ENCODE measurements at regions of chr1 and their contacts with region 1.

Region 1: GRCh38 chr1:1906185-1907097 is 8.6 kb upstream of the CALML6 start:
- DNase-seq: peak; percentile 58
- ATAC-seq: peak; percentile 29
- H3K4me3 Mint-ChIP-seq: peak overlapping the region; percentile 73
- H3K27ac Mint-ChIP-seq: peak overlapping the region; percentile 70
- H3K4me1 Mint-ChIP-seq: peaks cover 26% of the 10 kb centered on the region
- H3K27me3 Mint-ChIP-seq: no peaks in the 10 kb centered on the region
- CTCF ChIP-seq: no peak

Region 2: DNA sequence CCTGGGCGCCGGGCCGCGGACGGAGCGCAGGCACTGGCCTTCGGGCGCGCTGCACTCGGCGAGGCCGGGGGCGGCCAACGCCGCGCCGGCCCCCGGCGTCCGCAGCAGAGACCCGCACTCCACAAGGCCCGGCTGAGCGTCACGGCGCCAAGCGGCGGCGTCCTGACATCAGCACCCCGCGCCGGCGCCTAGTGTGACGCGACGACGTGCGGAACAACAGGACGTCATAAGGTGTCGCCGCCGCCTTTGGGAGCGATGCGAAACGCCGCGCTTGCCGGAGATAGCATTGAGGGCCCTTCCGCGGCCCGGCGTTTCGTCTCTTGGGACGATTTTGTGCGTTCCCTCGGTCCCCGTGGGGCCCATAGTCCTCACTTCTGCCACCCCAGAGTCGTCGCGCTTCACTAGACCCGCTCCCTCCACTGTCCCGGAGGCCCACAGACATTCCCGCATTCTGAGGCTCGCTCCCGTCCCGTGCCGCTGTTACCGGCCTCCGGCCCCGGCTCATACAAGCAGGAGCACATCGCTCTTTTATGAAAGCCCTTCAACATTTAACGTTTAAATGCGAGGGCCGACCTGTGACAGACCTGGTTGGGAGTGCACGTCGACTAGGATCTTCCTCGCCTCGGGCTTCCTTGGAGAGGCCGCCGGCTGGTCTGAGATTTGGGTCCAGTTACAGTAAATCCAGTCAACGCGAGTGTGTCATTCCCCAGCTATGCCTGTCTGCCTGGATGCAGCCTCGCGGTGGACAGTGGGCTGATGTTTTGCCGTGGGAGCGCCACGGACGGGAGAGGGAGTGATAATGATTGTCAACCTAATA is 331.5 kb before region 1 on chr1 and contains the start of gene SSU72:
- CTCF ChIA-PET with region 1: no interaction called
- POLR2A ChIA-PET with region 1: no interaction called
- intact Hi-C with region 1: loop called (anchors 5 kb)
- DNase-seq: peak; percentile 95
- ATAC-seq: peak; percentile 85
- H3K4me3 Mint-ChIP-seq: peak within 1 kb of the TSS; percentile 96
- H3K27ac Mint-ChIP-seq: peak within 1 kb of the TSS; percentile 98
- H3K4me1 Mint-ChIP-seq: peaks cover 37% of the 10 kb centered on the region
- H3K27me3 Mint-ChIP-seq: peaks cover 4% of the 10 kb centered on the region
- CTCF ChIP-seq: no peak
- total RNA-seq, gene SSU72: 111 and 118 TPM in 2 replicates

Region 3: GRCh38 chr1:1622010-1622787 is 284.2 kb before region 1 on chr1:
- CTCF ChIA-PET with region 1: no interaction called
- POLR2A ChIA-PET with region 1: no interaction called
- intact Hi-C with region 1: no loop called
- DNase-seq: no peak
- ATAC-seq: no peak
- H3K4me3 Mint-ChIP-seq: no peak overlapping the region
- H3K27ac Mint-ChIP-seq: no peak overlapping the region
- H3K4me1 Mint-ChIP-seq: peaks cover 3% of the 10 kb centered on the region
- H3K27me3 Mint-ChIP-seq: no peaks in the 10 kb centered on the region
- CTCF ChIP-seq: no peak

Region 4: GRCh38 chr1:1721201-1721600 is 185.2 kb before region 1 on chr1:
- CTCF ChIA-PET with region 1: interaction called, 4 read pairs
- POLR2A ChIA-PET with region 1: interaction called, 3 read pairs
- intact Hi-C with region 1: loop called (anchors 5 kb)
- DNase-seq: no peak
- ATAC-seq: no peak
- H3K4me3 Mint-ChIP-seq: no peak overlapping the region
- H3K27ac Mint-ChIP-seq: no peak overlapping the region
- H3K4me1 Mint-ChIP-seq: peaks cover 4% of the 10 kb centered on the region
- H3K27me3 Mint-ChIP-seq: no peaks in the 10 kb centered on the region
- CTCF ChIP-seq: no peak

Region 5: GRCh38 chr1:1777950-1778662 is 128.3 kb before region 1 on chr1 and contains the start of gene NADK:
- CTCF ChIA-PET with region 1: interaction called, 17 read pairs
- POLR2A ChIA-PET with region 1: interaction called, 29 read pairs
- intact Hi-C with region 1: loop called (anchors 1 kb)
- DNase-seq: peak; percentile 90
- ATAC-seq: peak; percentile 29
- H3K4me3 Mint-ChIP-seq: peak within 1 kb of the TSS; percentile 85
- H3K27ac Mint-ChIP-seq: peak within 1 kb of the TSS; percentile 95
- H3K4me1 Mint-ChIP-seq: peaks cover 76% of the 10 kb centered on the region
- H3K27me3 Mint-ChIP-seq: no peaks in the 10 kb centered on the region
- CTCF ChIP-seq: no peak
- total RNA-seq, gene NADK: 106 and 122 TPM in 2 replicates

Region 6: DNA sequence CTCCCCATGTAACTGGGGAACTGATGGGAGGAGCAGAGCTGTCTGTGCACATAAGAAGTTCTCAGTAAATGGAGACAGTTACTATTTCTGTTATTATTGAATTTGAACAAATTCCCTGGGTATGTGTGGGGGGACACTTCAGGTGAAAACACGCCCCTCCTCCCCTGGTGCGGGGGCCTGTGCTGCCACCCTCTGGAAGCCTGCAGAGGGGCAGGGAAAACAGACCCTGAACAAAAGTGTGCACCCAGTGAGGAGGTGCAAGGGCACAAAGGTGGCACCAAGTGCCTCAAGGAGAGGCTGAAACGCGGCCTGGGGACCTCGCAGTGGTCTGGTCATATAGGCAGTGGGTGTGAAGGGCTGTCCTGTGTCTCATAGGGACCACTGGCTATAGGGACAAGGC is 110.0 kb before region 1 on chr1:
- CTCF ChIA-PET with region 1: interaction called, 6 read pairs
- POLR2A ChIA-PET with region 1: interaction called, 4 read pairs
- intact Hi-C with region 1: loop called (anchors 5 kb)
- DNase-seq: no peak
- ATAC-seq: no peak
- H3K4me3 Mint-ChIP-seq: peak overlapping the region; percentile 30
- H3K27ac Mint-ChIP-seq: no peak overlapping the region
- H3K4me1 Mint-ChIP-seq: peaks cover 48% of the 10 kb centered on the region
- H3K27me3 Mint-ChIP-seq: no peaks in the 10 kb centered on the region
- CTCF ChIP-seq: no peak

Region 7: GRCh38 chr1:1858382-1859086 is 47.9 kb before region 1 on chr1:
- CTCF ChIA-PET with region 1: interaction called, 6 read pairs
- POLR2A ChIA-PET with region 1: interaction called, 10 read pairs
- intact Hi-C with region 1: no loop called
- DNase-seq: no peak
- ATAC-seq: no peak
- H3K4me3 Mint-ChIP-seq: peak overlapping the region; percentile 48
- H3K27ac Mint-ChIP-seq: peak overlapping the region; percentile 66
- H3K4me1 Mint-ChIP-seq: peaks cover 86% of the 10 kb centered on the region
- H3K27me3 Mint-ChIP-seq: no peaks in the 10 kb centered on the region
- CTCF ChIP-seq: no peak

Region 8: GRCh38 chr1:1919304-1920056 is 13.0 kb after region 1 on chr1:
- CTCF ChIA-PET with region 1: no interaction called
- POLR2A ChIA-PET with region 1: interaction called, 10 read pairs
- intact Hi-C with region 1: loop called (anchors 1 kb)
- DNase-seq: peak; percentile 100
- ATAC-seq: peak; percentile 90
- H3K4me3 Mint-ChIP-seq: peak overlapping the region; percentile 73
- H3K27ac Mint-ChIP-seq: peak overlapping the region; percentile 56
- H3K4me1 Mint-ChIP-seq: no peaks in the 10 kb centered on the region
- H3K27me3 Mint-ChIP-seq: no peaks in the 10 kb centered on the region
- CTCF ChIP-seq: no peak

Region 9: GRCh38 chr1:1938613-1939295 is 32.3 kb after region 1 on chr1:
- CTCF ChIA-PET with region 1: no interaction called
- POLR2A ChIA-PET with region 1: no interaction called
- intact Hi-C with region 1: no loop called
- DNase-seq: no peak
- ATAC-seq: no peak
- H3K4me3 Mint-ChIP-seq: no peak overlapping the region
- H3K27ac Mint-ChIP-seq: no peak overlapping the region
- H3K4me1 Mint-ChIP-seq: peaks cover 2% of the 10 kb centered on the region
- H3K27me3 Mint-ChIP-seq: no peaks in the 10 kb centered on the region
- CTCF ChIP-seq: no peak

Region 10: DNA sequence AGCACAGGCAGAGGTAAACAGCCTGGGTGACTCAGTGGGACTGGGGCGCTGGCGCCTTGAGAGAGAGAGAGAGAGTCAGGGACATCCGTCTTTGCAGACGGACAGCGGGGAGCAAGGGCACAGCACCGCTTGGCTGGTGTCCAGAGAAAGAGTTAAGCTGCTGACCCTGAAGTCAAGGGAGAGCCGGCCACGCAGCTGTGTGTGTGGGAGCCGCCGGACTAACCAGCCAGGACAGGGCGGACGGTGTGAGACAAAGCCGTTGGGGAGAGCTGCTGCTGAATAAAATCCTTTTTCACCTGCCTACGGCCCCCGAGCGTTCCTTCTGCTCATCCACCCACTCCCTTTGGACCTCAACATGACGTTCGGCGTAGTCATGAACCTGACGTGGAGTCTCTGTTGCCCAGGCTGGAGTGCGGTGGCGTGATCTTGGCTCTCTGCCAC is 82.7 kb after region 1 on chr1:
- CTCF ChIA-PET with region 1: no interaction called
- POLR2A ChIA-PET with region 1: no interaction called
- intact Hi-C with region 1: no loop called
- DNase-seq: no peak
- ATAC-seq: no peak
- H3K4me3 Mint-ChIP-seq: no peak overlapping the region
- H3K27ac Mint-ChIP-seq: no peak overlapping the region
- H3K4me1 Mint-ChIP-seq: no peaks in the 10 kb centered on the region
- H3K27me3 Mint-ChIP-seq: peaks cover 11% of the 10 kb centered on the region
- CTCF ChIP-seq: no peak